Ovary (tissue), 10 donors: ENCODE measurements at regions of chr5 and their contacts with region 1.

Region 1: GRCh38 chr5:65481635-65482295 is at the start of gene ADAMTS6:
- DNase-seq: peak; percentile 90 to 94 (median 93)
- H3K4me3 ChIP-seq: peak within 1 kb of the TSS; percentile 58
- H3K27ac ChIP-seq: peak within 1 kb of the TSS; percentile 67 to 83
- H3K4me1 ChIP-seq: no peaks in the 10 kb centered on the region
- H3K27me3 ChIP-seq: no peaks in the 10 kb centered on the region
- CTCF ChIP-seq: no peak
- EP300 ChIP-seq: no peak
- POLR2A ChIP-seq: peak; percentile 30
- total RNA-seq, gene ADAMTS6: 0.96 to 7.2 (median 2.7) TPM

Region 2: GRCh38 chr5:64634997-64635686 is 846.6 kb before region 1 on chr5:
- intact Hi-C with region 1: loop called in 2 of 4 experiments (anchors 5 to 10 kb)
- DNase-seq: no peak
- H3K4me3 ChIP-seq: no peak overlapping the region
- H3K27ac ChIP-seq: no peak overlapping the region
- H3K4me1 ChIP-seq: no peaks in the 10 kb centered on the region
- H3K27me3 ChIP-seq: no peaks in the 10 kb centered on the region
- CTCF ChIP-seq: peak; percentile 60 to 69 (median 69)
- EP300 ChIP-seq: no peak
- POLR2A ChIP-seq: no peak

Region 3: DNA sequence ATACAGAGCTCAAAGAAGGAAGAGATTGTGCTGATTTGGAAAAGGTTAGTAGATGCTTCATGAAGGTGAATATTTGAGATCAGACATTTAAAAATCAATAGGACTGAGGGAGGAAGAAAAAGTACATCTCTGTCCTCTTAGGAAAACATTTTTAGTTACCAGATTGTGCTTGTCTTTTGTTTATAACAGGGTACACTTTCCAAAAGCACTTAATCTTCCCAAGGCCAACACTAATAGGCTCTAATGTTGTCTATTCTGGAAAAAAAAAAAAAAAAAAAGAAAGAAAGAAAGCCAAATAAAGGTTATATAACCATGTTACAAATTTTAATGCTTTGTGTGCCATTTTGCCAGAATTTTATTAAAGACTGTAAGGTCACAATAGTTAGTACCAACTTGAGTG is 836.9 kb before region 1 on chr5:
- intact Hi-C with region 1: loop called in 1 of 4 experiments (anchors 5 kb)
- DNase-seq: no peak
- H3K4me3 ChIP-seq: no peak overlapping the region
- H3K27ac ChIP-seq: peak overlapping the region in 1 of 2 donors; percentile 82
- H3K4me1 ChIP-seq: peaks cover 10% of the 10 kb centered on the region
- H3K27me3 ChIP-seq: no peaks in the 10 kb centered on the region
- CTCF ChIP-seq: no peak
- EP300 ChIP-seq: no peak
- POLR2A ChIP-seq: no peak

Region 4: GRCh38 chr5:64811050-64811640 is 670.6 kb before region 1 on chr5:
- intact Hi-C with region 1: loop called in 3 of 4 experiments (anchors 5 to 10 kb)
- DNase-seq: no peak
- H3K4me3 ChIP-seq: no peak overlapping the region
- H3K27ac ChIP-seq: no peak overlapping the region
- H3K4me1 ChIP-seq: no peaks in the 10 kb centered on the region
- H3K27me3 ChIP-seq: no peaks in the 10 kb centered on the region
- CTCF ChIP-seq: peak in 2 of 3 donors; percentile 34 to 39
- EP300 ChIP-seq: no peak
- POLR2A ChIP-seq: no peak

Region 5: GRCh38 chr5:64952951-64953673 is 528.7 kb before region 1 on chr5:
- intact Hi-C with region 1: loop called in 2 of 4 experiments (anchors 5 to 10 kb)
- DNase-seq: no peak
- H3K4me3 ChIP-seq: no peak overlapping the region
- H3K27ac ChIP-seq: no peak overlapping the region
- H3K4me1 ChIP-seq: no peaks in the 10 kb centered on the region
- H3K27me3 ChIP-seq: no peaks in the 10 kb centered on the region
- CTCF ChIP-seq: no peak
- EP300 ChIP-seq: no peak
- POLR2A ChIP-seq: no peak

Region 6: GRCh38 chr5:64958757-64959391 is 522.9 kb before region 1 on chr5:
- intact Hi-C with region 1: loop called in 2 of 4 experiments (anchors 5 to 10 kb)
- DNase-seq: no peak
- H3K4me3 ChIP-seq: no peak overlapping the region
- H3K27ac ChIP-seq: no peak overlapping the region
- H3K4me1 ChIP-seq: no peaks in the 10 kb centered on the region
- H3K27me3 ChIP-seq: no peaks in the 10 kb centered on the region
- CTCF ChIP-seq: peak; percentile 8 to 42 (median 11)
- EP300 ChIP-seq: no peak
- POLR2A ChIP-seq: no peak

Region 7: DNA sequence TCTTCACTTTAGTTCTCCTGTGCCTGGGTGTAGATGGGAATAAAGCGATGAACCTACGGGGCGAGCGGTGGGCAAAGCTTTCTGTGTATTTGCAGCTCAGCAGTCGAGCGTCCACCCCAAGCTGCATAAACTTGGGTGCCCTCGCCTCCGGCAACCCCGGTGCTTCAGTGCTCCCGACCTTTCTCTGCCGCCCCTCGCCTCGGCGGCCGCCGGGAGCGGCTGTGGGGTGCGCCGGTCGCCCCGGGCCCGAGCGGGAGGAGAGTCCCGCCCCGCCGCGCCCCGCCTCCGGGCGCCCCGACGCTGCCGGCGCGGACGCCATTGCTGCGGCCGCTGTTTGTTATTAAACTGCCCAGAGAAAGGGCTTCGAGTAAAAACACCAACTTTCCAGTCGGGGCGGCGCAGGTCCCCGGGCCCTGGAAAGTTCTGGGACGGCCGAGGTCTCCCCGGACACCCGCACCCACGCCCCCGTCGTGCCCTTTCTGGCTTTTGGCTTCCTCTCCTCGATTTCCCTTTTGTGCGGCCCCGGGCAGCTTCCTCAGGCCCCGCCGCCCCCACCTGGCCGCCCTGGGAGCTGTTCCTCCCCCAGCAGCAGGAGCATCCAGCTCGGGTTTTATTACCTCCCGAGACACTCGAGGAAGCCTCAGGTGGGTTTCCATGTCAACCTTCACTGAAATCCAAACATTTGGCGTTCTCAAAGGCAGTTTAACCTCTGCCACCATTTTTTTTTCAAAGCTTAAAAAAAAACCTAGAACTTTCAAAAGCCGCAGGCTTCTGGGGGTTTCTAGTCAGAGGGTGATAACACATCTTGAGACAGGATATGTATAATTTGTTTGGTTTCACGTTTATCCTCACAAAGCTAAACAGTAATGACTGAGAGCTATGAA is 378.7 kb before region 1 on chr5:
- intact Hi-C with region 1: loop called in 1 of 4 experiments (anchors 5 kb)
- DNase-seq: peak; percentile 58 to 79 (median 66)
- H3K4me3 ChIP-seq: peak overlapping the region; percentile 44
- H3K27ac ChIP-seq: peak overlapping the region; percentile 65 to 80
- H3K4me1 ChIP-seq: peaks cover 6% of the 10 kb centered on the region
- H3K27me3 ChIP-seq: no peaks in the 10 kb centered on the region
- CTCF ChIP-seq: peak; percentile 12 to 34 (median 24)
- EP300 ChIP-seq: no peak
- POLR2A ChIP-seq: no peak

Region 8: GRCh38 chr5:65268525-65268924 is 213.2 kb before region 1 on chr5:
- intact Hi-C with region 1: no loop called
- DNase-seq: no peak
- H3K4me3 ChIP-seq: no peak overlapping the region
- H3K27ac ChIP-seq: no peak overlapping the region
- H3K4me1 ChIP-seq: no peaks in the 10 kb centered on the region
- H3K27me3 ChIP-seq: no peaks in the 10 kb centered on the region
- CTCF ChIP-seq: no peak
- EP300 ChIP-seq: no peak
- POLR2A ChIP-seq: no peak